Activated CD8-positive, alpha-beta memory T cell treated with anti-CD3 and anti-CD28 coated beads, Interleukin-2, amount 10 ng/mL, durations not matched to agents 7 days and 5 days (primary cell): ENCODE measurements at regions of chr2 and their contacts with region 1.

Region 1: GRCh38 chr2:102753563-102754159 is 8.2 kb upstream of the TMEM182 start:
- DNase-seq: no peak
- ATAC-seq: peak; percentile 33
- H3K4me3 Mint-ChIP-seq: no peak overlapping the region
- H3K27ac Mint-ChIP-seq: no peak overlapping the region
- H3K4me1 Mint-ChIP-seq: no peaks in the 10 kb centered on the region
- H3K27me3 Mint-ChIP-seq: no peaks in the 10 kb centered on the region

Region 2: DNA sequence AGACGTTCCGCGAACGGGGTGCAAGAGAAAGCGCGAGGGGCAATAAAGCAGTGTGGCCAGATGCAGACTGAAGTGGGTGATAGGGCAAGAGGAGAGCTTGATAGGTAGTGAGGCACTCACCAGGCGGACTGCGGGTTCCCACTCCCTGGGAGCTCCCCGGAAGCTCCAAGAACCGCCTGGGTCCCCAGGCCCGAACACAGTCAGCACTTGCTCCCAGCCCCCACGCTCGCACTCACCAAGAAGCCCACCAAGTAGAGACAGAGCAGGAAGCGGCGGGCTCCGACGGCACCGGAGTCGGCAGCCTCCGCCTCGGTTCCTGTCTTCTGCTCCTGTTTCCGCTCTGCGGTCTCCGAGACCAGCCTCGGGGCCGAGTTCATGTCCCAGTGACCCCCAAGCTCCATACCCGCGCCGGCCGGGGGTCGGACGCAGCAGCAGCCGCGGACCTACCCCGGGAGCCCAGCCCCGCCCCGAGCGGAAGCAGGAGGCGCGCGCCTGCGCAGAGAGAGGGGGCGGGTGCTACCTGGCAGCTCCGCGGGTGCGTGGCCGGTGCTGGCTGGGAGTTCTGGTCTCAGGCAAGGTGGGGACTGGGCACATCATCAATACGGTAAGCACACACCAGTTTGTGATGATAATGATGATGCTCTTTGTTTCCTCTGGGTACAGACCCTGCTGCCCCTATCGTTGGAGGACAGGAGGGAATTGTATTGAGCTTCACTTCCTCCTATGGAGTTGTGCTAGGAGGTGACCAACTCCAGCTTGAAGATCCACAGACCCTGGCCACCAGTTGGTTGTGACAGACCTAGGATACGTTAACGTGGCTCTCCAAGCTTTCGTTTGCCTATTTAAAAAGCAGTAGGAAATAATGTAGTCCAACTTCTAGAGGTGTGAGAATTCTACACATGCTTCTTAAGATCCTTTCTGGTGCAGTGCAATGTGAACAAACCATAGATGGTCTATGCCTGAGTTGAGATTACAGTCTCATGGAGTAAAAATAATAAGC is 17.0 kb before region 1 on chr2:
- CTCF ChIA-PET with region 1: interaction called, 47 read pairs
- DNase-seq: peak; percentile 86
- ATAC-seq: peak; percentile 98
- H3K4me3 Mint-ChIP-seq: peak overlapping the region; percentile 92
- H3K27ac Mint-ChIP-seq: peak overlapping the region; percentile 89
- H3K4me1 Mint-ChIP-seq: peaks cover 29% of the 10 kb centered on the region
- H3K27me3 Mint-ChIP-seq: no peaks in the 10 kb centered on the region

Region 3: GRCh38 chr2:102806250-102806837 is 52.7 kb after region 1 on chr2:
- CTCF ChIA-PET with region 1: interaction called, 30 read pairs
- DNase-seq: peak; percentile 50
- ATAC-seq: no peak
- H3K4me3 Mint-ChIP-seq: no peak overlapping the region
- H3K27ac Mint-ChIP-seq: no peak overlapping the region
- H3K4me1 Mint-ChIP-seq: peaks cover 12% of the 10 kb centered on the region
- H3K27me3 Mint-ChIP-seq: no peaks in the 10 kb centered on the region